Activated CD4-positive, alpha-beta memory T cell treated with anti-CD3 and anti-CD28 coated beads, Interleukin-2, amount 10 ng/mL, durations not matched to agents 7 days and 5 days (primary cell): ENCODE measurements at regions of chr13 and their contacts with region 1.

Region 1: GRCh38 chr13:99269627-99270241 is 11.6 kb upstream of the GPR18 start:
- DNase-seq: peak; percentile 34
- H3K4me3 Mint-ChIP-seq: no peak overlapping the region
- H3K27ac Mint-ChIP-seq: no peak overlapping the region
- H3K4me1 Mint-ChIP-seq: peaks cover 58% of the 10 kb centered on the region
- H3K27me3 Mint-ChIP-seq: no peaks in the 10 kb centered on the region

Region 2: GRCh38 chr13:99151516-99151915 is 118.2 kb before region 1 on chr13:
- CTCF ChIA-PET with region 1: no interaction called
- POLR2A ChIA-PET with region 1: no interaction called
- DNase-seq: peak; percentile 21
- H3K4me3 Mint-ChIP-seq: no peak overlapping the region
- H3K27ac Mint-ChIP-seq: no peak overlapping the region
- H3K4me1 Mint-ChIP-seq: peaks cover 8% of the 10 kb centered on the region
- H3K27me3 Mint-ChIP-seq: no peaks in the 10 kb centered on the region

Region 3: GRCh38 chr13:99176309-99177276 is 93.1 kb before region 1 on chr13:
- CTCF ChIA-PET with region 1: interaction called, 398 read pairs
- POLR2A ChIA-PET with region 1: interaction called, 11 read pairs
- DNase-seq: peak; percentile 79
- H3K4me3 Mint-ChIP-seq: no peak overlapping the region
- H3K27ac Mint-ChIP-seq: no peak overlapping the region
- H3K4me1 Mint-ChIP-seq: peaks cover 29% of the 10 kb centered on the region
- H3K27me3 Mint-ChIP-seq: peaks cover 10% of the 10 kb centered on the region

Region 4: GRCh38 chr13:99288089-99288488 is 18.4 kb after region 1 on chr13:
- CTCF ChIA-PET with region 1: interaction called, 33 read pairs
- POLR2A ChIA-PET with region 1: interaction called, 7 read pairs
- DNase-seq: peak; percentile 60
- H3K4me3 Mint-ChIP-seq: no peak overlapping the region
- H3K27ac Mint-ChIP-seq: peak overlapping the region; percentile 84
- H3K4me1 Mint-ChIP-seq: peaks cover 73% of the 10 kb centered on the region
- H3K27me3 Mint-ChIP-seq: no peaks in the 10 kb centered on the region

Region 5: GRCh38 chr13:99322297-99323103 is 52.8 kb after region 1 on chr13:
- CTCF ChIA-PET with region 1: interaction called, 13 read pairs
- POLR2A ChIA-PET with region 1: interaction called, 6 read pairs
- DNase-seq: peak; percentile 44
- H3K4me3 Mint-ChIP-seq: peak overlapping the region; percentile 40
- H3K27ac Mint-ChIP-seq: peak overlapping the region; percentile 97
- H3K4me1 Mint-ChIP-seq: peaks cover 74% of the 10 kb centered on the region
- H3K27me3 Mint-ChIP-seq: no peaks in the 10 kb centered on the region

Region 6: DNA sequence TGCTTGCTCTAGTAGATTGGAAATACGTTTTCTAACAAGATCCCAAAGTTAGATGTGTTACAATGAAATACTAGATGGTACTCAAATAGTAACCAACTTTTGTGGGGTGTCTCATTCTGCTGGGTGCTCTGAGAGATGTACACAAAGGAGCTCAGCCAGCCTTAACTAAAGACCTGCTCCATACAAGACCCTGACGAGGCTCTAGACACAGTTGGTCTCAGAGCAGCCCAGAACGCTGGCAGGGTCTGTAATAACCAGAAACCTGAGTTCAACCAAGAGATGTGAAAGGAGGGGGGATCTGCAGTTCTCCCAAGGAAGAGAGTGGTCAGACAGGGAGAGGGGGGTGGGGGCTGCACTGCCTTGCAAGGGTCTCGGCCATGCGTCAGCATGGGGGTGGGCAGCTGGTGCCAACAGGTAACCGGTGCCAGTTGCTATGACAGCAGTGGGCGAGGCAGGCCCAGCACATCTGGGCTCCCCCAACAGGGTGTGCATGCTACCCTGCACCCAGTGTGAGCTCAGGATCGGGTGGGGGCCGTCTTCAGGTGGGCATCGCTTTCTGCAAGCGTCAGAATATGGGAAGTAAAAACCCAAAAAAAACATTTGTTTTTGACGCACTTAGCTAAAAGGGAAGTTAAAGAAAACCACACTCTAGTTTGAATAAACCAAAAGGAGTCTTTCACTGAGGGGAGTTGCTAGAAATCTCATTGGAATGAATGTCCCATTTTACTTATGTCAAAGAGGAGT is 105.4 kb after region 1 on chr13:
- CTCF ChIA-PET with region 1: interaction called, 35 read pairs
- POLR2A ChIA-PET with region 1: no interaction called
- DNase-seq: no peak
- H3K4me3 Mint-ChIP-seq: no peak overlapping the region
- H3K27ac Mint-ChIP-seq: peak overlapping the region; percentile 21
- H3K4me1 Mint-ChIP-seq: peaks cover 77% of the 10 kb centered on the region
- H3K27me3 Mint-ChIP-seq: no peaks in the 10 kb centered on the region

Region 7: DNA sequence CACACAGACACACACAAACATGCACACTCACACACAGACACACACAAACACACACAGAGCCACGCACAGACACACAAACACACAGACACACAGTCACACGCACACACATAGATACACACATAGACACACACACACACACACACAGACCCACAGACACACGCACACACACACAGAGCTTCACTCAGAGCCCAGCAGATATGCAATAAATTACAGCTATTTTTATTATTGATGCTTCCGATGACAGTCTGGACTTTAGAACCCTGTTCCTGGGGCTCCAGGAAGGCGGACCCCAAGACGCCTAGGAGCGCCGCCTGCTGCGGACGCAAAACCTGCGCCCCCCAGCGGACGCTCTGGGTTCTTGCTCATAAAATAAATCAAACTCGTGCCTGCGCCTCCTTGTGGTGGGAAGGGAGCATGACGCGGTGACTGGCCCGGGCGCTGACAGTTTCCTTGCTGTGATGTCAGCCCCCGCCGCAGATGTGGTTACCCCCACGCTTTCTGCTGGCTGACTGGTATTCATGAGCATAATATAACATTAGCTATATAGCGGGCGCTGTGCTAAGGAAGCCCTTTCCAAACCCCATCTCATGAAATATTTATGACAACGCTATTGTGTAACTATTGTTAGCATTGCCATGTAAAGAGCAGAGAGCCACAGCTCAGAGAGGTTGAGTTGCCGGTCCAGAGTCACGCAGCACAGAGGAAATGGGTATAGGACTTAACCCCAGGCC is 167.1 kb after region 1 on chr13:
- CTCF ChIA-PET with region 1: interaction called, 317 read pairs
- POLR2A ChIA-PET with region 1: interaction called, 57 read pairs
- DNase-seq: peak; percentile 96
- H3K4me3 Mint-ChIP-seq: peak overlapping the region; percentile 51
- H3K27ac Mint-ChIP-seq: peak overlapping the region; percentile 48
- H3K4me1 Mint-ChIP-seq: peaks cover 66% of the 10 kb centered on the region
- H3K27me3 Mint-ChIP-seq: peaks cover 21% of the 10 kb centered on the region

Region 8: DNA sequence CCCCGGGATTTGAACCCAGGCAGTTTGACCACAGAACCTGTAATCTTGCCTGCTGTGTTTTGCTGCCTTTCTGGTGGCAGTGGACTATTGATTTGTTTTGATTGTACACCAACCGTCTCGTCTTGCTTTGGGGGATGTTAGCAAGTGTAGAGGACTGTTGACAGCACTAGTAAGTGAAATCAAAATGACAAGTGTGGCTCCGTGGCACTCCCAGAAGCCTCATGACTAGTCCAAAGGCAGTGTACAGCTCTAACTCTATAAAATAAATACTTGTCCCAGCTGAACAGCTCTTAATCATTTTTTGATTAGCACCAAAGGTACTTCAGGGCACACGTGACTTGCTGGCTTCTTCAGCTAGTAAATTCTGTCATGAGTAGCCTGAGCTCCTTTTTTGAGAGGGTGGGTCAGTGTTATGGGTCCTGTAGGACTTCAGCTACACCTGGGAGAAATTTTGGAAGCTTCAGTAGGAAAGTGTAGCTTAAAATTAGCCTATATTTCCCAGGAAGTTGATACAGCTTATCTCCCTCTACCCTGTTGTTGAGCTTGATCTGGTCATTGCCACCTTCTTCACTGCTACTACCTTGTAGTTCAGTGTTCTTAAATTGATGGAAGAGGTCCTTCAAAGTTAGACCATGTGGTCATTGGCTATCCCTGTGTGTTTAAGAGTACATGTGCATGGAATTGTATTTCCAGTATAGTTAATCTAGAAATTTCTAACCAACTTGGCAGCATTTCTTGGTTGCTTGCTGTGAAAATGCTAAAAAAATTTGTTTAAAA is 246.6 kb after region 1 on chr13:
- CTCF ChIA-PET with region 1: no interaction called
- POLR2A ChIA-PET with region 1: no interaction called
- DNase-seq: no peak
- H3K4me3 Mint-ChIP-seq: no peak overlapping the region
- H3K27ac Mint-ChIP-seq: no peak overlapping the region
- H3K4me1 Mint-ChIP-seq: peaks cover 22% of the 10 kb centered on the region
- H3K27me3 Mint-ChIP-seq: no peaks in the 10 kb centered on the region